Stomach (tissue), 19 donors: ENCODE measurements at regions of chr10 and their contacts with region 1.

Region 1: DNA sequence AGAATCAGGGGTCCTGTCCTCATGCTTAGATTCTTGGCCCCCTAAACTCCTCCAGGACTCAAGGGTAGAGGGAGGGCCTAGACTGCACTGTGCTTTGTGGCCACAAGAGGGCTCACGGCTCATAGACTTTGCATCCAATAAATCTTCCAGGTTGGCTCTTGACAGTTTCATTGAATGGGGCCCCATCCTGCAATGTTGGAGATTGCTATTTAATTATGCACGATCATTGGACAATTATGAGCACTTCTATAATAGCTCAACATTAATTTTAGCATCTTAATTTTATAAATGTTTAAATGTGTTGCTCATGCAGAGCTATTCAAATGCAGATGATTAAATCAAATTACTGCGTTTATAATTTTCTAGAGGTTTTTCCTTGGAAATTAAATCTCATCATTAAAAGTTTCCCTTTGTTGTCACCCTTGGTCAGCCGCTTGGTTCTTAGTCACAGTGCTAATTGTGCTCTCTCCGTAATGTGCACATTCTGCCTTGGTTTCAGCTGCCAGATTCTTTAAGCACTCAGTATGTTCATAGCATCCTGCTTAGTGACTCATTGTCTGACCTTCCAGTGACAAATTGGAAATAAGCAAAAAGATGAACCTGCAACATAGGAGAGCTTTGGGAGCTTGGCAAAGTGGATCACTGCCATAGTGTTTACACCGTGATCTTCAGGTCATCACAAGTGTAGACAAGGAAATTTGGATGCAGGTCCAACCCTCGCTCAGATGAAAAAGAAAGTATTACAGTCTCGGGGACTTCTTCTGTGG is 33.4 kb upstream of the PLPP4 start:
- DNase-seq: peak; percentile 53 to 71
- H3K4me3 ChIP-seq: no peak overlapping the region
- H3K27ac ChIP-seq: no peak overlapping the region
- H3K4me1 ChIP-seq: no peaks in the 10 kb centered on the region
- H3K27me3 ChIP-seq: no peaks in the 10 kb centered on the region
- CTCF ChIP-seq: peak in 5 of 7 experiments; percentile 54 to 86 (median 63)
- EP300 ChIP-seq: no peak
- POLR2A ChIP-seq: no peak

Region 2: DNA sequence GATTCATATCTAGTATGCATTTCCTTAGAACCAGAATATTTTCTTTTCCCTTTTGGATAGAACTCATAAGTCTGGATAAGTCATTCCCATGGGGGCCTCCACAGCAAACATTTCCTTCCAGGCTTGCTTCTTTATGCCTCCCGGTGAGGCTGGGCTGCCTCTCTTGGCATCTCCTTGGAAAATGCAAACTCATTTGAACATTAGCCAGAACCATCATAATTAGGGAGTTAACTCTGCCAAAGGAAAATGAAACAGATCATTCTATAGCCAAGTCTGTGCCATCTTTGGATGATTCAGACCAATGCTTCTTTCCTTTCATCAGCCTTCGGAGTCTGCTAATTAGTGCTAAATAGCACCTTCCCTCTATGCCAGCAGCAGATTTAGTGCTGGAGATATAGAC is 114.5 kb after region 1 on chr10:
- intact Hi-C with region 1: no loop called
- DNase-seq: no peak
- H3K4me3 ChIP-seq: no peak overlapping the region
- H3K27ac ChIP-seq: no peak overlapping the region
- H3K4me1 ChIP-seq: no peaks in the 10 kb centered on the region
- H3K27me3 ChIP-seq: no peaks in the 10 kb centered on the region
- CTCF ChIP-seq: no peak
- EP300 ChIP-seq: no peak
- POLR2A ChIP-seq: no peak

Region 3: DNA sequence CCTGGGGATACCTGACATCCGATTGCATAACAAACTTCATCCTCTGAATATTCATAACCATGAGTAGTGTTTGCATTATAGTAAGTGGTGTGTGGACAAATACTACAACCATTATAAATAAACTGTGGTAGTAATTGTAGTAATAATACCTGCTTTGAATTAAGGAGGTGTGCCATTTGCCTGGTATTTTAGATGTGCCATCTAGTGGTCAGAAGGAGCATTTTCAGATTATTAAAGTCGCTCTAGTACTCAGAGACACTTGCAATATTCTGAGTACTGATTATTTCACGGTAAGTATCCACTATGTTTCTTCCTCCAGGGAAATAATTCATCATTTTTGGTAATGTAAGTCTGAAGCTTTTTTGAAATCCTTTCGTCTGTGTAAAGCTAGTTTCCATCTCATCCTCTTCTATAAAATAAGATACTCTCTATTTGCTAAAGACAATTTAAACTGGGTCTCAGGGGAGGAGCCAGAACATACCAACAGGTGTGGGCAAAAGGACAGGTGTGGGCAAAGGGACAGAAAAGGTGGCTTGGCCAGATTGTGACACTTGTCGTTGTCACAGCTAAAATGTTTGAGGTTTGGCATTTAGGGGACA is 312.3 kb after region 1 on chr10:
- intact Hi-C with region 1: loop called (anchors 10 kb)
- DNase-seq: peak in 1 of 2 donors; percentile 27
- H3K4me3 ChIP-seq: no peak overlapping the region
- H3K27ac ChIP-seq: no peak overlapping the region
- H3K4me1 ChIP-seq: no peaks in the 10 kb centered on the region
- H3K27me3 ChIP-seq: peaks cover 0 to 21% (median 0%) of the 10 kb centered on the region in 3 donors
- CTCF ChIP-seq: peak in 5 of 7 experiments; percentile 52 to 70 (median 61)
- EP300 ChIP-seq: no peak
- POLR2A ChIP-seq: no peak